MCF 10A (cell line): ENCODE measurements at regions of chr2 and their contacts with region 1.

Region 1: DNA sequence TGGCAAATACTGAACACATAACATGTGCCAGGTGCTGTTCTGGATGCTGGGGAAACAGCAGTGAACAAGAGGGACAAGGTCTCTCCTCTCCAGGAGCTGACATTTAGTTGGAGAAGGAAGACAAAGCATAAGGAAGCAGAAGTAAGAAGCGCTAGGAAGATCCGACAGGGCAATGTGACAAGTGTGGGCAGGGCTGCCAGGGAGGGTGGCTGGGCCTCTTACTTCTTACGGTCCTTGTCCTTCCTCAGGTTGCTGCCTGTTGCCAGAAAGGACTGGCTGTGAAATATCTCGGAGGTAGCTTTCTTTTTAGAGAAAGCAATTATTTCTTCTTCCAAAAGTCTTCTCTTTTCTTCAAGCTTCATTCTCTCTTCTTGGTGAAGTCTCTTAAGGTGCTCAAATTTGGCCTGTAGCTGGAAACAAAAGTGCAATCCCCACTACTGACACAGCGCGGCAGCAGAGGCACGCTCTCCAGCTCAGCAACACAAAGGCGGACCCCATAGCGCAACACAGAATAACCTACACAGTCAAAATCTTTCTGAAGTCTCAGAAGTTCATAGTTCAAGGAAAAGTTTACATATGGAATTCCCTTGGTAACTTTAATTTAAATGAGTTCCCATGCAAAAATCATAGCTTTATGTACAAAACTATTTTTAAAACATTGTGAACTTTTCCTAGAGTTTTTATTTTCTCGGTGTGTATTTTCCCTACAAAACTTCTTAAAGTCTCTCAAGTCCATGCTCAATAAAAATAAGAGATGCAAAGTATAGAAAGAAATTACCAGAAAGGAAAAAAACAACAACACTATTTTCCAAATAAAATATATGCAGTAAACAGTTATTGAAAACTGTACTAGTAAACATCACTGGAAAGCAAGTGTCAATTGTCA is 67.7 kb downstream of the SEPTIN10 start:
- DNase-seq: peak; percentile 62
- H3K4me3 Mint-ChIP-seq: no peak overlapping the region
- H3K27ac Mint-ChIP-seq: no peak overlapping the region
- H3K4me1 Mint-ChIP-seq: peaks cover 4% of the 10 kb centered on the region
- H3K27me3 Mint-ChIP-seq: no peaks in the 10 kb centered on the region
- CTCF ChIP-seq: peak; percentile 95

Region 2: DNA sequence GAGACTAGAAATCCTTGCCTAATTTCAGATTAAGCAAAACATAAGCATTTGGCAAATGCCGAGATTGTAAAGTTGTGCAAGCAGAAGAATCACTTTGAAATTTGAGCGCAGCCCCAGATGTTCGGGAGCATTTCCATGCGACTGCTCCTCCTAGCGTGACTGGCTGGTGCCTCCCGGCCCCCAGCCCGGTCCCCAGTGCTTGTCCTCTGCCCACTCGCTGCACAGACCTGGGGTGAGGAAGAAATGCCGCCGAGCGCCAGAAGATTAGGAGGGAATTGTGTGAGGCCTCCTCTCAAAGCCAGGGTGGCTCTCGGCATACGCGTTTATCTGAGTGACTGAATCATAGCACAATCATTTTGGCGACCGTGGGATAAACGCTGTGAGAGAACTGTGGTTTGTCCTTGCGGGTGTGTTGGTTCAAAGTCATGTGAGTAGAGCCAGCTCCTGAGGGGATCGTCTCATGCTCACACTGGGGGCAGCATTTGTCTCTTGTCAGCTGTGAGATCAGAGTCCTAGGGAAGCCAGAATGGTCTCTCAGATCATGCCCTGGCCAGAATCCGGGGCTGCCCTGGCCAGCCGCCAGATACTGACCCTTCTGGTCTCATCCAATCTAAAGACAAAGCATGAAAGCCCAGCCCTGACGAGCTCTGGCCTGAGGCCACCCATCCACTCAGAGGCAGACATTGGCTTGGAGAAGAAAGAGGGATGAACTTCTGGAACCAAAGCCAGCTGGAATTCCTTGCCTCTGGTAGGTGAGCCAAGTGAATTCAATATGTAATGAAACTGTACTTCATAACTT is 227.7 kb before region 1 on chr2:
- CTCF ChIA-PET with region 1: no interaction called
- POLR2A ChIA-PET with region 1: no interaction called
- intact Hi-C with region 1: no loop called
- DNase-seq: peak; percentile 78
- H3K4me3 Mint-ChIP-seq: no peak overlapping the region
- H3K27ac Mint-ChIP-seq: no peak overlapping the region
- H3K4me1 Mint-ChIP-seq: peaks cover 22% of the 10 kb centered on the region
- H3K27me3 Mint-ChIP-seq: no peaks in the 10 kb centered on the region
- CTCF ChIP-seq: no peak

Region 3: GRCh38 chr2:109497463-109497862 is 48.6 kb before region 1 on chr2:
- CTCF ChIA-PET with region 1: no interaction called
- POLR2A ChIA-PET with region 1: no interaction called
- intact Hi-C with region 1: no loop called
- DNase-seq: no peak
- H3K4me3 Mint-ChIP-seq: no peak overlapping the region
- H3K27ac Mint-ChIP-seq: no peak overlapping the region
- H3K4me1 Mint-ChIP-seq: no peaks in the 10 kb centered on the region
- H3K27me3 Mint-ChIP-seq: no peaks in the 10 kb centered on the region
- CTCF ChIP-seq: no peak

Region 4: GRCh38 chr2:109516445-109517117 is 29.5 kb before region 1 on chr2:
- CTCF ChIA-PET with region 1: interaction called, 5 read pairs
- POLR2A ChIA-PET with region 1: no interaction called
- intact Hi-C with region 1: loop called (anchors 1 kb)
- DNase-seq: peak; percentile 72
- H3K4me3 Mint-ChIP-seq: no peak overlapping the region
- H3K27ac Mint-ChIP-seq: no peak overlapping the region
- H3K4me1 Mint-ChIP-seq: peaks cover 17% of the 10 kb centered on the region
- H3K27me3 Mint-ChIP-seq: no peaks in the 10 kb centered on the region
- CTCF ChIP-seq: peak; percentile 83

Region 5: GRCh38 chr2:109558076-109558882 is 12.2 kb after region 1 on chr2:
- CTCF ChIA-PET with region 1: interaction called, 52 read pairs
- POLR2A ChIA-PET with region 1: no interaction called
- intact Hi-C with region 1: no loop called
- DNase-seq: peak; percentile 82
- H3K4me3 Mint-ChIP-seq: no peak overlapping the region
- H3K27ac Mint-ChIP-seq: peak overlapping the region; percentile 21
- H3K4me1 Mint-ChIP-seq: peaks cover 6% of the 10 kb centered on the region
- H3K27me3 Mint-ChIP-seq: no peaks in the 10 kb centered on the region
- CTCF ChIP-seq: no peak

Region 6: GRCh38 chr2:109604597-109604996 is 58.5 kb after region 1 on chr2:
- CTCF ChIA-PET with region 1: interaction called, 12 read pairs
- POLR2A ChIA-PET with region 1: interaction called, 4 read pairs
- intact Hi-C with region 1: no loop called
- DNase-seq: peak; percentile 81
- H3K4me3 Mint-ChIP-seq: peak overlapping the region; percentile 9
- H3K27ac Mint-ChIP-seq: peak overlapping the region; percentile 57
- H3K4me1 Mint-ChIP-seq: peaks cover 33% of the 10 kb centered on the region
- H3K27me3 Mint-ChIP-seq: no peaks in the 10 kb centered on the region
- CTCF ChIP-seq: no peak

Region 7: DNA sequence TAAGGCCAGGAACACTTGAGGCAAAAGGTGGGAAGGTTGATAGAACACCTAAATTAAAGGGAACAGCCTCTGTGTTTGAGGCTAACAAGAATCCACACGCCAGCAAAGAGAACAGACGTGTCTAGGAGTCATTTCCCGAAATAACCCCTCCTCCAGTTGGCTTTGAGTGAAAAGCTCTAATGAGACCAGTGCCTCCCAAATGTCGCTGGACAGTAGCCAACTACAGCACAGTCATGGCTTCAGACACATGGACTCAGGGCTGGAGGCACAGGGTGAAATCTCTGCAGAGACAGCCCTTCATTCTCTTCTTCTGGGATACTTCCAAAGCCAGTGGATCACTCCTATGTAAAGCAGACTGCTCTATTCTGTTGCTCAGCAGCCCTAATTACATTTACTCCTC is 117.7 kb after region 1 on chr2:
- CTCF ChIA-PET with region 1: interaction called, 15 read pairs
- POLR2A ChIA-PET with region 1: interaction called, 8 read pairs
- intact Hi-C with region 1: loop called (anchors 5 kb)
- DNase-seq: peak; percentile 98
- H3K4me3 Mint-ChIP-seq: no peak overlapping the region
- H3K27ac Mint-ChIP-seq: peak overlapping the region; percentile 24
- H3K4me1 Mint-ChIP-seq: peaks cover 17% of the 10 kb centered on the region
- H3K27me3 Mint-ChIP-seq: no peaks in the 10 kb centered on the region
- CTCF ChIP-seq: no peak

Region 8: GRCh38 chr2:109702618-109702985 is 156.5 kb after region 1 on chr2:
- CTCF ChIA-PET with region 1: interaction called, 48 read pairs
- POLR2A ChIA-PET with region 1: interaction called, 6 read pairs
- intact Hi-C with region 1: no loop called
- DNase-seq: peak; percentile 89
- H3K4me3 Mint-ChIP-seq: peak overlapping the region; percentile 68
- H3K27ac Mint-ChIP-seq: peak overlapping the region; percentile 97
- H3K4me1 Mint-ChIP-seq: peaks cover 40% of the 10 kb centered on the region
- H3K27me3 Mint-ChIP-seq: no peaks in the 10 kb centered on the region
- CTCF ChIP-seq: no peak

Region 9: DNA sequence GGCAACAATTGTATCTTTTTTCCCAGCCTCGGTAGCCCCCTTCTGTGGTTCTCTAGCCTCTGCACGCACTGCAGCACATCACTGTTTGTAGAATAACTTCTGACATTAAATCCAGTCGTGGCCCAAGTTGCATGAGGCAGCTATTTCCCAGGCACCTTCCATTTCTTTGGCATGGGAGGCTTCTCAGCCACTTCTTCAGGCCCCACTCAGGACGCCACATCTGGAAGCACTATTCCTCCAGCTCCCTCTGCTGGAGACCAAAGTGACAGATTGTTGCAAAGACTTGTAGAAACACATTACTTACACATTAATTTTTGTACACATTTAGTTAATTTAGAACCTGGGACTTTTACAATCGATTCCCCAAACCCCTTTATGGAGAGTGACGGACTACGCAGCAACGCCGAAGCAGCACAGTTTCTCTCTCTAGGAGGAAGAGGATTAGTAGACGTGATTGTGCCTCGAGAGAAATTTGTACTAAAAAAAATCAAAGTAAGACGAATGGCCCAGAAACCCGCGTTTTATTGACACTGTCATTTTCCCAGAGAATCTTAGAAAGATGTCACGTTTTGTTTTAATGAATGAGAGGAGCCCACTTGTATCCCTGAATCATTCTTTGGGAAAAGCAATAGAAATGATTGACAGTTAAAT is 190.2 kb after region 1 on chr2:
- CTCF ChIA-PET with region 1: interaction called, 54 read pairs
- POLR2A ChIA-PET with region 1: interaction called, 7 read pairs
- intact Hi-C with region 1: loop called (anchors 1 kb)
- DNase-seq: peak; percentile 70
- H3K4me3 Mint-ChIP-seq: no peak overlapping the region
- H3K27ac Mint-ChIP-seq: no peak overlapping the region
- H3K4me1 Mint-ChIP-seq: no peaks in the 10 kb centered on the region
- H3K27me3 Mint-ChIP-seq: no peaks in the 10 kb centered on the region
- CTCF ChIP-seq: peak; percentile 72